AG04450 (cell line): ENCODE measurements at regions of chr22 and their contacts with region 1.

Region 1: DNA sequence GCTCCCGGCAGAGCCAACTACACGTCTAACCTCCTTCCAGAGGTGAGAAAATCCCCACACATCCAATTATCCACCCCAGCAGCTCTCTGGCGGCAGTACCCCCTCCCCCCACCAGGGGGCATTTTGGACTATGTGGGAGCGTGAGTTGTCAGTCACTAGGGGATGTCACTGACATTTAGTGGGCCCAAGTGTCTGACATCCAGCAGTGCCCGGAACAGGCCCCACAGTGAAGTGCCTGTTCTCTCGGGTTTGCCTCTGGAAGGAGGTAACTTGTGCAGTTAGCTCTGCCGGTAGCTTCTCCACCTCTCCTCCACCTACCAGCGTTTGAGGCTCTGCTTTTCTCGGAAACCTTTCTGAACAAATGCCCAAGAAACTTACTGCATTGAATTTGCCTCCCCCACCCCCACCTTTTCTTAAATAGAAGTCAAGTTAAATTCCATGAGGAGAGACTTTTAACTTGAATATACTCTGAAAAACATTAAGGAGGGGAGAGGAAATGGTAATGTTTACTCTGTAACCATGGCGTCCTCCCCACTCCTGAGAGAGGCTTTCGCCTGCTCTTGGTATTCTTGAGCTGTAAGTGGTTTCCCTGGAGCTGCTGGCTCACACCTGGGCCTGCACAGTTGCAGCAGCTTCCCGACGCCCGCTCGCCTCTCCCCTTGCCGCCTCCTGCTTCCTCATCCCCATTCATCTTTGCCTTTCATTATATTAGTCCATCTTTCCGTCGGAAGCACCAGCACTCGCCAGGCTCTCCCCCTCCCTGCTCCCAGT is 112.8 kb downstream of the WNT7B start:
- DNase-seq: peak; percentile 11
- H3K4me3 ChIP-seq: no peak overlapping the region
- H3K27ac ChIP-seq: no peak overlapping the region
- H3K27me3 ChIP-seq: peaks cover 18% of the 10 kb centered on the region
- CTCF ChIP-seq: peak; percentile 97

Region 2: DNA sequence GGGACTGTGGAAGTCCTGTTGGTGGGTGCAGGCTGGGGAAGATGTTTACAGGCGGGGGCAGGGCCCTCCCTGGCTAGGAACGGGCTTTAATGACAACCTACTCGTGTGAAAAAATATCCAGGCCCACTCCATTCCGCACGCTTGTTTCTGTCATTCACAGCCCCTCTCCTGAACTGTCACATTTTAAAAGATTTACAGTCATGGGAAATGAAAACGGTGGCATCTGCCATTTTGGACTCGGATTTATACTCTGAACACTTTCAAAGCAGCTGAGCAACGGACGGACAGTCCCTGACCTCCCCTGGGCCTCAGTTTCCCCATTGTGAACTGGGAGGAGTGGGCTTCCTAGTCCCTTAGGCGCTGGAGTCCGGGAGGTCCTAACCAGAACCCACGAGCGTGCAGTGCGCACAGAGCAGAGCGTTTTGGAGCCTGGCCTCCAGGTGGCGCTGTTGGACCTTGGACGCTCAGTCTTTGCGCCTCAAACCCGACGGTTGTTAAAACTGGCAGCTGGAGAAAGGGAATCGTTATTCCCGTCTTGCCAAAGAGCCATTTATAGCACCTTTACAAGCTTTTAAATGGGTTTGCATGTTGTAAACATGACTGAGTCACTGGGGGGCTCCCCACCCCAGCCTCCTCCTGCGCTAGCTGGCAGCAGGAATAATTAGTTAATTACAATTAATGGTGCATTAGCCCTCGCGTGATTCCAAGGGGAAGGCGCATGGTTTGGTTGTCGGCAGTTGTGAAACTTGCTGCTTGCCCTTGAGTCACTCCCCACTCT is 286.2 kb before region 1 on chr22:
- CTCF ChIA-PET with region 1: interaction called, 13 read pairs
- POLR2A ChIA-PET with region 1: no interaction called
- DNase-seq: peak; percentile 41
- H3K4me3 ChIP-seq: no peak overlapping the region
- H3K27ac ChIP-seq: no peak overlapping the region
- H3K27me3 ChIP-seq: no peaks in the 10 kb centered on the region
- CTCF ChIP-seq: peak; percentile 95

Region 3: DNA sequence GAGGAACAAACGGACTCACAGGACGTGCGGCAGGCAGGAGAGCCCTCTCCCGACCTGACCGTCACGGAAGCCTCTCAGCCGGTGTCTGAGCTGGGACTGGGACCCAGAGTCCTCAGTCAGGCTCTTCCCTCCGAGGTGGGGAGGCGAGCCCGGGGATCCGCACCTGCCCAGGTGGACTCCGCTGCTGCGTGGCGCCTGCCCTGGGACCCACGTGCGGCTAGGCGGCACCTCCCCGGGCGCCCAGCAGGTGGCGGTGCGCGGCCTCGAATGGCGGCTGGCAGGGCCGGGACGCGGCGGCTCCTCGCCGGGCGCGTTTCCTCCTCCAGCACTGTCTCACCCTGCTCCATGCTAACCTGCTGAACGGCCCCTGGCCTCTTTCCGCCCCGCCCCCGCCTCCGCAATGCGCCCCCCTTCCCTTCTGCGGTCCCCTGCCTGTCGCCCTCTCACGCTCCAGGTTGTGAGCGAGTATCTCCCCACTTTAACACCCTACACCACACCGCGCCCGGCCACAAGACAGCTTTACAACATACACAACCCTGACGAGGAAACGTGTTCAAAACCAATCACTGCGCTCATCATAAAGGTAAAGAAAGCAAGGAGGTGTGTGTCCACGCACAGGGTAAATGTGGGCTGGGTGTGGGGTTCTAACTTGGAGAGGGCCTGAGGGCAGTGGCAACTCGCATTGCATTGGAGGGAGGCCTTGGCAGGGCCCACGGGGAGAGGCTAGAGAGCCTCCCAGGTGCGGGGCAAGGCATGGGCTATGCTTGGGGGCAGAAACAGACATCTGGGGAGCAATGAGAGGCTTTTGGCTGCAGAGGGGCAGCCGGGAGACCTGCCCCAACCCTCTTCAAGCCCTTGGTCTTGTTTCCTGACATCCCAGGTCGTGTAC is 218.4 kb before region 1 on chr22:
- CTCF ChIA-PET with region 1: interaction called, 13 read pairs
- POLR2A ChIA-PET with region 1: no interaction called
- DNase-seq: no peak
- H3K4me3 ChIP-seq: peak overlapping the region; percentile 38; the same call in 1 of the 2 replicates
- H3K27ac ChIP-seq: no peak overlapping the region
- H3K27me3 ChIP-seq: peaks cover 15% of the 10 kb centered on the region
- CTCF ChIP-seq: peak; percentile 72

Region 4: GRCh38 chr22:45684169-45684568 is 180.0 kb before region 1 on chr22:
- CTCF ChIA-PET with region 1: no interaction called
- POLR2A ChIA-PET with region 1: no interaction called
- DNase-seq: no peak
- H3K4me3 ChIP-seq: no peak overlapping the region
- H3K27ac ChIP-seq: no peak overlapping the region
- H3K27me3 ChIP-seq: no peaks in the 10 kb centered on the region
- CTCF ChIP-seq: no peak

Region 5: GRCh38 chr22:45731798-45732495 is 132.2 kb before region 1 on chr22:
- CTCF ChIA-PET with region 1: interaction called, 16 read pairs
- POLR2A ChIA-PET with region 1: no interaction called
- DNase-seq: no peak
- H3K4me3 ChIP-seq: no peak overlapping the region
- H3K27ac ChIP-seq: no peak overlapping the region
- H3K27me3 ChIP-seq: no peaks in the 10 kb centered on the region
- CTCF ChIP-seq: peak; percentile 63

Region 6: DNA sequence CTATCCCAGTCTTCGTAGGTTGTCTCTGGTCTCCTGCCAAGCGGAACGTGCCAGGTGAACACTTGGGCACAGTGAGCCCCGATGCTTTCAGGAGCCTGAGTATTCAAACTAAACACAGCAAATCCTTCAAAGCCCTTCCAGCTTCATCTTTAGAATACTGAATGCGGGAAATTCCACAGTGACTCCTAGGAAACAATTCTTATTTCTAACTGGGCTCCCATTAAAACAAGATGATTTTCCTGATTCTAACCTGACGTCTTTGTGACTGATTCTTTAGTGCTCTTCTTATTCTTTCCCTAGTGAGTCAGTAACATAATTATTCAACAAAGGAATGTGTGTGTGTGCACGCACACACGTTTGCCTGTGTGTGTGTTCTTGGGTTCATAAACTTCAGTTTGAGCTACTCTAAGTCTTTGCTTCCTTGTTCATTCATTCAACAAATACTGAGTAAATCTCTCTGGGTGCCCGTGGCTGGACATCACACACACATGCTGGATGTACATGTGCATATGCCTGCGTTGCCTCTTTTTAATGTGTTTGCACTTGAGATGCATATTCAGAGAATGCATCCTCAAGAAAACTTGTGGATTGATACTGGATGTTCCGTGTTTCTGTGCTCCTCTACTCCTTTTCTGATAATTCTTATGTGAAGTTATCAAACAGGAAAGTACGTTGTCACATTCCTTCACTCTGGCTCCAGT is 21.7 kb before region 1 on chr22:
- CTCF ChIA-PET with region 1: interaction called, 18 read pairs
- POLR2A ChIA-PET with region 1: no interaction called
- DNase-seq: peak; percentile 15
- H3K4me3 ChIP-seq: no peak overlapping the region
- H3K27ac ChIP-seq: no peak overlapping the region
- H3K27me3 ChIP-seq: no peaks in the 10 kb centered on the region
- CTCF ChIP-seq: no peak

Region 7: GRCh38 chr22:45852826-45853225 is 11.3 kb before region 1 on chr22:
- CTCF ChIA-PET with region 1: interaction called, 18 read pairs
- POLR2A ChIA-PET with region 1: no interaction called
- DNase-seq: no peak
- H3K4me3 ChIP-seq: no peak overlapping the region
- H3K27ac ChIP-seq: no peak overlapping the region
- H3K27me3 ChIP-seq: no peaks in the 10 kb centered on the region
- CTCF ChIP-seq: no peak

Region 8: GRCh38 chr22:45876136-45877035 is 12.2 kb after region 1 on chr22:
- CTCF ChIA-PET with region 1: interaction called, 37 read pairs
- POLR2A ChIA-PET with region 1: no interaction called
- DNase-seq: no peak
- H3K4me3 ChIP-seq: no peak overlapping the region
- H3K27ac ChIP-seq: no peak overlapping the region
- H3K27me3 ChIP-seq: peaks cover 47% of the 10 kb centered on the region
- CTCF ChIP-seq: no peak

Region 9: DNA sequence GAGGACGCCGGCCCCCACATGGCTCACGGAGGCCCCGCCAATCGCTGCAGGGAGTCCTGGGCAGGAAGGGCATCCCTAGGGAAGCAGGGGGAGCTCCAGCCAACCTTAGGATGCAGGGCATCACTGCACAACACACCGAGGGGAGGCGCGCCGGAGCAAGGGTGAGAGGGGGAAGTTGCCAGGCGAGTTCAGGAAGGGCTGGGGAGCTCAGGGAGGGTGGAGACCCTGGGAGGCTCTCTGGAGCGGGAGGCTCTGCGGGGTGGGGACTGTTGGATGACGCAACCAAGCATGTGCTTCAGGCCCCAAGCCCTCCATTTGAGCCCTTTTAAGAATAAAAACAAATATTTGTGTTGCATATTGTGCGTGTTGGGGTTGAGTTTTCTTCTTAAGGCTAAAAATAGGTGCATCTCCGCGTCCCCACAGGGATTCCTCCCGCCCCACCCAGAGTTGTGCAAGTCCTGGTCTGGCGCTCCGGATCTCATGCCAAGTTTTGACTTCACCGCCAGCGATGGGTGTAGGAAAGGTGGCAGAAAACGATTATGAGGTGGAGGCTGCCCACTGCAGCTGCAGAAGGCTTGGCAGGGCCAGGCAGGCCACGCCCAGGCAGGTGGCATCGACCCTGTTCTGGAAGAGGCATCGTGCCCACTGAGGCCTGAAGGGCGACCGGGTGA is 47.6 kb after region 1 on chr22:
- CTCF ChIA-PET with region 1: no interaction called
- POLR2A ChIA-PET with region 1: no interaction called
- DNase-seq: no peak
- H3K4me3 ChIP-seq: no peak overlapping the region
- H3K27ac ChIP-seq: no peak overlapping the region
- H3K27me3 ChIP-seq: peaks cover 2% of the 10 kb centered on the region
- CTCF ChIP-seq: no peak